Mammary epithelial cell (primary cell): ENCODE measurements at regions of chr2 and their contacts with region 1.

Region 1: DNA sequence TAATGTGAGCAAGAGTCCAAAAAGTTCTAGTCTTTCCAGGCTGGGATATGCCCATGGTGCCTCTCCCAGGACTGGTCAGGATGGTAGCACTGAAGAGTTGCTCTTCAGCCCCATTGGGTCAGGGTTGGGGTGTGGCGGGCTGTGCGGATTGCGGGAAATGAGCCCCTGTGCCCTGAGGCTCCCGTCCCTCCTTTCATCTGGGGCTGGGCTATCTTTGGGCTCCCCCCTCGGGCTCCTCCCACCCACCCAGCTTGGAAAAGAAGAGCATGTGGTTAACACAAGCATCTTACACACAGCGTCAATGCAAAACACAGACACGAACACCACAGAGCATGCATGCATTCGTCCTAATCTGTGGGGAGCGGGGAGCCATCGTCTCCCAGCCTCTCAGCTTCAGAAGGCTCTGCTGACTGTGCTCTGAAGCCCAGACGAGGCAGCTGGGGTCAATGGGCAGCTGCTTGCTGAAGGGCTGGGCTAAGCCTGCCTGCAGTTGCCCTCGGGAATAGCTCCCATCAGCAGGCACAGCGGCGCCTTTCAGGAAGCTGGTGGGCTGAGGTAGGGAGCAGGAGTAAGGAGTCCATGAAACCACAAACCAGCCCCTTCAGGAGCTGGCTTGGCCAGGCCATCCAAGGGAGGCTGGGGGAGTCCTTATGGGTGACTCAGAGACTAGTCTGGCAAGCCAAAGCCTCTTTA is 112.9 kb downstream of the CLIP4 start:
- DNase-seq: no peak
- H3K4me3 ChIP-seq: no peak overlapping the region
- H3K27ac ChIP-seq: no peak overlapping the region
- H3K4me1 ChIP-seq: peaks cover 18% of the 10 kb centered on the region
- H3K27me3 ChIP-seq: no peaks in the 10 kb centered on the region
- CTCF ChIP-seq: no peak

Region 2: GRCh38 chr2:28801726-28802487 is 426.2 kb before region 1 on chr2:
- CTCF ChIA-PET with region 1: no interaction called
- dilution Hi-C with region 1: no loop called
- in situ Hi-C with region 1: no loop called
- intact Hi-C with region 1: no loop called
- DNase-seq: peak; percentile 60
- H3K4me3 ChIP-seq: no peak overlapping the region
- H3K27ac ChIP-seq: peak overlapping the region; percentile 36
- H3K4me1 ChIP-seq: peaks cover 14% of the 10 kb centered on the region
- H3K27me3 ChIP-seq: no peaks in the 10 kb centered on the region
- CTCF ChIP-seq: no peak

Region 3: GRCh38 chr2:29174937-29175336 is 53.1 kb before region 1 on chr2:
- CTCF ChIA-PET with region 1: no interaction called
- dilution Hi-C with region 1: loop called (anchors 5 kb)
- in situ Hi-C with region 1: no loop called
- intact Hi-C with region 1: no loop called
- DNase-seq: no peak
- H3K4me3 ChIP-seq: no peak overlapping the region
- H3K27ac ChIP-seq: no peak overlapping the region
- H3K4me1 ChIP-seq: no peaks in the 10 kb centered on the region
- H3K27me3 ChIP-seq: no peaks in the 10 kb centered on the region
- CTCF ChIP-seq: no peak

Region 4: DNA sequence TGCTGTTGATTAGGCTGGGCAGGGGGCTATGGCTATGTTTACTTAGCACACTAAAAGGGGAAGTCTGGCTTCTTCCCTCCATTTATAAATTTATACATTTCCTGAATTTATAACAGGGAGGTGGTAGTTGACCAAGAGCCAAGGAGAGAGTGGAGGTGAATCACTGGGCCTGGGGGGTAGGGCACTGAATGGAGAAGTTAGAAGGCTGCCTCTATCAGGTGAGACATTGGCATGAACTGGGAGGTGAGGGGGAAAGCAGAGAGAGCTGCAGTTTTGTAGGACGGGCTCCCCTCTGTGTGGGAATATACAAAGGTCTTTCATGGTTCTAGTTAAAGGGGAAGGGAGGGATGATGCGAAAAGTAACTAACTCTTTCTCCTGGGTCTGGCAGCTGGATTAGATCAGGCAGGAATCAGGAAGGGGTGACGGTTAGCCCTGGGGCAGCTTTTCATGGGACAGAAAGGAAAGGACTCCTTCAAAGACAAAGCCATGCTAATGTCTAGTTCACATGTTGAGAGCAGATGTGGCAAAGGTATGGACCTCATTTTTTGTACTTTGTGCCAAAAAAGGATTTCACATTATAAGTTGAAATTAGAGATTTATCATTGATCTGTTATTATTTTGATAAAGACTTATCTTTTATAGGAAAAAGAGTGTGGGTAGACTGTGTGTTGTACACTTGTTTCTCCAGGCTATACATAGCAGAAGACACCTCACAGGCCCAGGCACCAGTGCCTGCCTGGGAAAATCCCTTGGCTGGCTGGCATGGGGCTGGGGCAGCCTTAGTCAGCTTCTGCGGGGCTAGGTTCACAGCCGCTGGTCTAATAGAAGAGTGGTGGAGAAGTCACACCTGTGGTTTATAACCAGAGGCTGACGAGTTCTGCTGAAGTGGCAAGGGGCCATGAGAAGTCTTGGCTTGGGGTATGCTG is 45.9 kb after region 1 on chr2:
- CTCF ChIA-PET with region 1: no interaction called
- dilution Hi-C with region 1: loop called (anchors 5 kb)
- in situ Hi-C with region 1: no loop called
- intact Hi-C with region 1: no loop called
- DNase-seq: peak; percentile 27
- H3K4me3 ChIP-seq: no peak overlapping the region
- H3K27ac ChIP-seq: no peak overlapping the region
- H3K4me1 ChIP-seq: peaks cover 15% of the 10 kb centered on the region
- H3K27me3 ChIP-seq: peaks cover 2% of the 10 kb centered on the region
- CTCF ChIP-seq: no peak

Region 5: GRCh38 chr2:29295857-29296256 is 67.8 kb after region 1 on chr2:
- CTCF ChIA-PET with region 1: no interaction called
- dilution Hi-C with region 1: no loop called
- in situ Hi-C with region 1: no loop called
- intact Hi-C with region 1: no loop called
- DNase-seq: no peak
- H3K4me3 ChIP-seq: no peak overlapping the region
- H3K27ac ChIP-seq: no peak overlapping the region
- H3K4me1 ChIP-seq: no peaks in the 10 kb centered on the region
- H3K27me3 ChIP-seq: no peaks in the 10 kb centered on the region
- CTCF ChIP-seq: peak; percentile 39 to 65